ENCODE measurements at regions of chr12 and their contacts with region 1.

Region 1: DNA sequence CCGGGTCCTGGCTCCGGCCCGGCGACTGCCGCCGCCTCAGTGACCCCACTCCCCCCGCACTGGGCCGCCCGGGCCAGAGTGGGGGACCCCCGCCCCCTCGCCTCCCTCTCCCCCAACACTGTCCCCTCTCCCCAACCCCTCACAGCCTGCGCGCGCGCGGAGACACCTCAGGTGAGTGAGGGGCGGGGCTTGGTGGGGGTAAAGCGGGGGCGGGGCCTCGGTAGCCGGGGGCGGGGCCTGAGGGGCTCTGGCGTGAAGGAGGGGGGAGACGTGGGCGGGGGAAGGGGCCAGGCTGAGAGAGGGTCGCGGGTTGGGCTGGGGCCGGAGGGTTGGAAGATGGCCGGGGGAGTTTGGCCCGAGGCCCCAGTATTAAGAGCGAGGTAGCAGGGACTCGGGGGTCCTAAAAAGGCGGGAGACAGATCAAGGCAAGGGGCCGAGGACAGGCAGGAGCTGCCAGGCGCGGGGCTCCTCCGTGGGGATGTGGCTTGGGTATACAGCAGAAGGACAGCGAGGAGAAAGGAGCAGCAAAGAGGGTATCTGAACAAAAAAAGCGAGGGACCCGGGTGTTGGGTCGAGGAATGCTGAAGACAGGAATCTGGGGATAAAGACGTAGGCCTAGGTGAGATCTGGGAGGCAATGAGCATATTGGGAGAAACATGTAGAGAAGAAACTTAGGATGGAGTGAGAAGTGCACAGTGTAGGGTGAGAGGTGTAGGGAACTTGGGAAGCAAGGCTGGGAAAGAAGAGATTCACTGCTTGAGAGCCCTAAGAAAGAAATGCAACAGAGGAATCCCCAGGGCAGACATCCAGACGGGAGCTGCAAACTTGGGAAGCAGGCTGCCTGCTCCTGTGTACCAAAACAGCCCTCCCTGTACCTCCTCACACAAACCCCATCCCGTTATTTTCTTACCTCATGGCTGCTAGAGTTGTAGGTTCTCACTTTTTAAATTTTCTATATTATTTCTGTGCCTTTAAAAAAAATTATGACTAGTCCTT is 10.8 kb downstream of the SUOX start:
- DNase-seq: peak; percentile 73
- H3K4me3 Mint-ChIP-seq: peak overlapping the region; percentile 86
- H3K27ac Mint-ChIP-seq: peak overlapping the region; percentile 74
- H3K4me1 Mint-ChIP-seq: peaks cover 29% of the 10 kb centered on the region
- H3K27me3 Mint-ChIP-seq: no peaks in the 10 kb centered on the region

Region 2: DNA sequence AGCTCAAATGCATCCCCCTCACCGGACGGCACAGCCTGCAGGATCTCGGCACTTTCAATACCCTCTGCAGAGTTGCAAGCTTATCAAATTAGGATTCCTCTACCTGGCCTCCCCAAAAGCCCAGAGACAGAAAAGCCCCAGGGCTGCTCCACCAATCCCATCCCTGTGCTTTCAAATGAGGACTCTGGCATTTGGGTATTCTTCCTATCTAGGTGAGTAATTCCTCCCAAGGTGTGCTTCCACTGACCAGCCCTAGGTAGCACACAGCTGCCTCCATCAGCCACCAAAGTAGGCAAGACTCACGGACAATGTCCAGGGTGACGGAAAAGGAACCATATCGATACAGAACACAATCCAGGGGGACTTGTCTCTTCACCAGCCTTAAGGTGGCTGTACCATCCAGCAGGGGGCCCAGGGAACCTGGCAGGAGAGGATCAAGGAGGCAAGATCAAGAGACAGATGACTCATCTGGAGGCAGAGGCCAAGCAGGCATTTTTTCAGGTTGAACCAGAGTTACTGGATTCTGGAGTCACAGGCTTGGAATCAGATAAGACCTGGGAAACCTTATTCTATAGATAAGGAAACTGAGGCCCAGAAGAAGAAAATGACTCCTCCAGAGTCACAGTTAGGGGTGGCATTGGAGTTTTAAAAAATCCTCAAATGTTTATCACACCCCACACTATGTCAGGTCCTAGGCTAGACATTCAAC is 51.9 kb before region 1 on chr12:
- CTCF ChIA-PET with region 1: no interaction called
- POLR2A ChIA-PET with region 1: no interaction called
- DNase-seq: peak; percentile 43
- H3K4me3 Mint-ChIP-seq: no peak overlapping the region
- H3K27ac Mint-ChIP-seq: peak overlapping the region; percentile 7
- H3K4me1 Mint-ChIP-seq: peaks cover 3% of the 10 kb centered on the region
- H3K27me3 Mint-ChIP-seq: no peaks in the 10 kb centered on the region

Region 3: GRCh38 chr12:56020423-56021184 is 12.7 kb after region 1 on chr12 and contains the start of gene IKZF4:
- CTCF ChIA-PET with region 1: interaction called, 5 read pairs
- POLR2A ChIA-PET with region 1: interaction called, 20 read pairs
- DNase-seq: peak; percentile 32
- H3K4me3 Mint-ChIP-seq: peak within 1 kb of the TSS; percentile 98
- H3K27ac Mint-ChIP-seq: peak within 1 kb of the TSS; percentile 94
- H3K4me1 Mint-ChIP-seq: peaks cover 55% of the 10 kb centered on the region
- H3K27me3 Mint-ChIP-seq: no peaks in the 10 kb centered on the region
- total RNA-seq, gene IKZF4: 17.6 to 19.4 TPM

Region 4: DNA sequence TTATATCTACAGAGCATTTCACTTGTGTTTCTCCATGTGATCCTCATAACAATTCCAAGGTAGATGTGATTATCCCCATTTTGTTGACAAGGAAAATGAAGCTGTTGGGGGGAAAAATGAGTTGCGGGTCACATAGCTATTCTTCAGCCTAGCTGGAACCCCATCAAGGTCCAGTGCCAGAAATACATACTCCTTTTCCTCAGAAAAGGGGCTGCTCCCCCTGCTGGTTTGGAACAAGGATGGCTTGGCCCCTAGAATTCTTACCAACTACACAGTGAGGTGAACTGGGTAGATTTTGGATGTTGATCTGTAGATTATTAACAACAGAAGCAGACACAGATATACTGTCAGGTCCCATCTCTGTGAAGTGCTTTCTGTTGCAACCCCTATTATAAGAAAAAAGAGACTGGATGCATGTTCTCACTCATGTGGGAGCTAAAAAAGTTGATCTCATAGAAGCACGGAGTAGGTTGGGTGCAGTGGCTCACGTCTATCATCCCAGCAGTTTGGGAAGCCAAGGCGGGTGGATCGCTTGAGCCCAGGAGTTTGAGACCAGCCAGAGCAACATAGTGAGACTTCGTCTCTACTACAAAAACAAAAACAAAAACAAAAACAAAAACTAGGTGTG is 21.9 kb after region 1 on chr12:
- CTCF ChIA-PET with region 1: interaction called, 15 read pairs
- POLR2A ChIA-PET with region 1: no interaction called
- DNase-seq: peak; percentile 52
- H3K4me3 Mint-ChIP-seq: no peak overlapping the region
- H3K27ac Mint-ChIP-seq: peak overlapping the region; percentile 21
- H3K4me1 Mint-ChIP-seq: peaks cover 53% of the 10 kb centered on the region
- H3K27me3 Mint-ChIP-seq: no peaks in the 10 kb centered on the region